ENCODE measurements at regions of chr19 and their contacts with region 1.

Region 1: GRCh38 chr19:2261438-2262172 is 5.4 kb upstream of the JSRP1 start:
- DNase-seq: no peak
- ATAC-seq: no peak
- H3K4me3 Mint-ChIP-seq: no peak overlapping the region
- H3K27ac Mint-ChIP-seq: no peak overlapping the region
- H3K4me1 Mint-ChIP-seq: peaks cover 68% of the 10 kb centered on the region
- H3K27me3 Mint-ChIP-seq: no peaks in the 10 kb centered on the region
- CTCF ChIP-seq: no peak

Region 2: GRCh38 chr19:2289714-2290435 is 28.3 kb after region 1 on chr19:
- CTCF ChIA-PET with region 1: interaction called, 3 read pairs
- POLR2A ChIA-PET with region 1: interaction called, 14 read pairs
- intact Hi-C with region 1: no loop called
- DNase-seq: peak; percentile 69
- ATAC-seq: peak; percentile 69
- H3K4me3 Mint-ChIP-seq: peak overlapping the region; percentile 90
- H3K27ac Mint-ChIP-seq: peak overlapping the region; percentile 90
- H3K4me1 Mint-ChIP-seq: peaks cover 54% of the 10 kb centered on the region
- H3K27me3 Mint-ChIP-seq: no peaks in the 10 kb centered on the region
- CTCF ChIP-seq: no peak